K562 (cell line): ENCODE measurements at regions of chr7 and their contacts with region 1.

Region 1: DNA sequence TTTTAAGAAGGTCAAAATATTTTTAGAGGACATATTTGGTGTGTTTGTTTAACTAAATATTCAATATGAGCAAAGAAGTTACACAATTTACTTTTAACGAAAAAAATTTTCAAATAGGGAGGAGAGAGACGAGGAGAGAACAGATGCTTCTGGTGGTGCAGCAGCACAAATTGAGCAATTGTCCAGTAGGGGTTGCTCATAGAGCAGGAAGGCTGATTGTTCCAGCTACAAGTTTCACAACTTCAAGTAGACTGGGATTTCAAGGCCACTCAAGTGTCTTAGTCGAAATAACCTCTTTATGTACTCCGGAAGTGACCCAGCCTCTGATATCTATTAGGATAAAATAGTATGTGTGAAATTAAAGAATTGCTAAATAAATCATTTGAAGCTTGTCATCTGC is 197.9 kb downstream of the HDAC9 start:
- DNase-seq: peak in 1 of 4 experiments; percentile 2
- ATAC-seq: no peak
- H3K4me3 ChIP-seq: no peak overlapping the region
- H3K27ac ChIP-seq: no peak overlapping the region
- H3K4me1 ChIP-seq: no peaks in the 10 kb centered on the region
- H3K27me3 ChIP-seq: no peaks in the 10 kb centered on the region
- CTCF ChIP-seq: no peak
- EP300 ChIP-seq: no peak
- POLR2A ChIP-seq: no peak
- RAD21 ChIP-seq: peak in 1 of 2 experiments; percentile 35; a peak in 1 of 4 replicates

Region 2: DNA sequence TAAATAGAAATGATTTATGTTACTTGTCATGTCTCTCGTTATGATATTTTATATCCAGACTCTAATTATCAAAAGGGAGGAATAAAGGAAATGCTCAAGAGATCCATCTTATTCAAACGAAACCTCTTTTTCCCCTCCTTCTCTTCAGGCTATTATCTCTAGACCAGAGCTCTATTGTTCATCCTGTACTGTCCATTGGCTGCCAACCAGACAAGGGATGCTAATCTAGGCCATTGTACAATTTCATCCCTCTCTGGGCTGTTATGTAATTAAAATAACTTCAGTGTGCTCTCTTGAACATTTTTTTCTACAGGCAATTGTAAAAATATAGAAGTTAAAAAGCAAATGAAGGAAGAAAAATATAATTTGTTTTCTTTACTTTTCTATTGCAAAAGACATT is 22.6 kb after region 1 on chr7:
- CTCF ChIA-PET with region 1: no interaction called
- POLR2A ChIA-PET with region 1: no interaction called
- in situ Hi-C with region 1: no loop called
- intact Hi-C with region 1: loop called (anchors 2 kb)
- DNase-seq: no peak
- ATAC-seq: no peak
- H3K4me3 ChIP-seq: no peak overlapping the region
- H3K27ac ChIP-seq: no peak overlapping the region
- H3K4me1 ChIP-seq: no peaks in the 10 kb centered on the region
- H3K27me3 ChIP-seq: no peaks in the 10 kb centered on the region
- CTCF ChIP-seq: no peak
- EP300 ChIP-seq: no peak
- POLR2A ChIP-seq: no peak
- RAD21 ChIP-seq: no peak